GM10248 (cell line): ENCODE measurements at regions of chr18 and their contacts with region 1.

Region 1: DNA sequence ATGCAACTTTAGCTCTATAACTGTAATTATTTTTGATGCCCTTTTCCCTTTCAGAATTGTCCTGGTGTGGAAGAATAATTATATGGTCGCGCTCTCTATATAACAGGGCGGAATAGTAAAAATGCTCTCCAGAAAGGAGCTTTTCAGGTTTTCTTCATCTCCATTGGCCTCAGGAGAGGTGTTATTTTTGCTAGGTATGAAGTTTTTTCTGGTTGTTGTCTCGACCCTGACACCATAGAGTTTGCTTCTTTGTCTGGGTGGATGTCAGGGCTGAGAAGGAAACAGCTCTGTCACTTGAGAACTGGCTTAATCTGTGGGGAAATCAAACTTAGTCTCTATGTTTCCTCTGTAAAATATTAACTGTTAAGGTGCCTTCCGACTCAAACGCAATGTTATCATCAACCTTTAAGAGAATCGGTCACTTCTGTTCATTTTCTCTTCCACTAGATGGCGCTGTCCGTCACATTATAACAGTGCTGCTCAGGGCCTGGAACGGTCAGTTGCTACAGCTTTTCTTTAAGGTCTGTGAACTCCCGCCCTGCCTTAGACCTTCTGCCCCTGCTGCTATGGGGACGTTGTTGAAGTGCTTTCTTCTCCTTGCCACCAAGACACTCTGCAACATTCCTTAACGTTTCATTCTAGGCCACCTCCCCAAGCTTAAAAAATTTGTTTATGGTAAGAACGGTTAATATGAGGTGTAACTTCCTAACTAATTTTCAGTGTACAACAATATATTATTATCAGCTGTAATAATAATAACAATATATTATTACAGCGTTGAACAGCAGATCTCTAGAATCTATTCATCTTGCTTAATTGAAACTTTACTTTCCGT is 23.8 kb upstream of the SERPINB12 start:
- DNase-seq: peak; percentile 45
- CTCF ChIP-seq: peak; percentile 68

Region 2: GRCh38 chr18:63505566-63506335 is 12.6 kb before region 1 on chr18:
- CTCF ChIA-PET with region 1: interaction called, 29 read pairs
- POLR2A ChIA-PET with region 1: no interaction called
- DNase-seq: peak; percentile 49
- CTCF ChIP-seq: peak; percentile 43

Region 3: DNA sequence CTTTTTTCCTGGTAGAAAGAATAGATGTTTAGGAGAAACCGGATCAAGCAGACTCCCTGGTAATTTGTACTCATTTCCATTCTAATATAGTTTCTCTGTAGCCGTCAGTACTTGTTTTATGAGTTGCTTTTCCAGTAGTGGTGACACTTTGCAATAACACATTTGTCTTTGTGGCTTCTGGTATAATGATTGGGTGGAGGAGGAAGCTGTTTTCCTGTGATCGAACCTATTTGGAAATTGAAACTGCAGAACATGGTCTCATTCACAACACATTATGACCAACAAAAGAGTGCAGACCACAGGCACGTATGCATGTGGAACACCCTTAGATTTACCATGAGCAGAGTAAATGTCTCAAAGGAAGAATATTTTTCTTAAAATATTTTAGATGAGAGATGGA is 16.2 kb after region 1 on chr18:
- CTCF ChIA-PET with region 1: interaction called, 60 read pairs
- POLR2A ChIA-PET with region 1: no interaction called
- DNase-seq: no peak
- CTCF ChIP-seq: no peak

Region 4: GRCh38 chr18:63578357-63578958 is 60.1 kb after region 1 on chr18:
- CTCF ChIA-PET with region 1: interaction called, 179 read pairs
- POLR2A ChIA-PET with region 1: no interaction called
- DNase-seq: peak; percentile 21
- CTCF ChIP-seq: peak; percentile 78

Region 5: GRCh38 chr18:63741769-63742168 is 223.4 kb after region 1 on chr18:
- CTCF ChIA-PET with region 1: interaction called, 11 read pairs
- POLR2A ChIA-PET with region 1: no interaction called
- DNase-seq: no peak
- CTCF ChIP-seq: no peak